Psoas muscle (tissue), 8 donors: ENCODE measurements at regions of chr1 and their contacts with region 1.

Region 1: DNA sequence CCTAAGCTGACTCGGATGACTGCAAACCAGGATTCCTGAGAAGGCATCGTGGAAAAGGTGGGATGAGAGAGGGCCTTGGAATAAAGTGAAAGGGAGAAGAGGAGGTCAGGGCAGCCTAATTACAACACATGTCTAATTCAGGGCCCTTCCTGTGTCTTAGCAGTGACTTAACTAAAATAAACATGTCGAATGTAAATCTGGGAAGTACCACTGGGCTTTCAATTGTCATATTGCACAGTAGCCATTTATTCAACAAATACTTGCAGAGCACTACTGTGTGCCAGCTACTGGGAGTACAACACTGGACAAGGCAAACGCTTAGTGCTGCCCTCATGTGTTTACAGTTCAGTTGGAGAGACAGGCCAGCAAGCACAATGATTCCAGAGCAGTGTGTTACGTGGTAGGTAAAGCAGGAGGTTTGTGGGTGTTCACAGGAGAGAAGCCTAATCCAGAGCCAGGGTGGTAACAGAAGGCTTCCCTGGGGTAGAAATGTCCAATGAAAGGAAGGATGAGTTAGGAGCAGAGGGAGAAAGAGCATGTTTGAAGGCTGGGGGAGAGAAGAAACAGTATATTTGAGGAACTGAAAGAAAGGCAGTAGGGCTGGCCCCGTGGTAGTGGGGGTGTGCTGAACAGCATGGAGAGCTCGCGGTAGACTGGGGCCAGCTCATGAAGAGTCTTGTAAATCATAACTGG is 38.0 kb upstream of the RASAL2 start:
- DNase-seq: no peak
- ATAC-seq: peak; percentile 58 to 78 (median 67)
- H3K4me3 ChIP-seq: no peak overlapping the region
- H3K27ac ChIP-seq: peak overlapping the region; percentile 31
- H3K4me1 ChIP-seq: peaks cover 10% of the 10 kb centered on the region
- H3K27me3 ChIP-seq: no peaks in the 10 kb centered on the region
- CTCF ChIP-seq: peak; percentile 16

Region 2: GRCh38 chr1:177690996-177691395 is 364.9 kb before region 1 on chr1:
- intact Hi-C with region 1: no loop called
- DNase-seq: no peak
- ATAC-seq: no peak
- H3K4me3 ChIP-seq: no peak overlapping the region
- H3K27ac ChIP-seq: no peak overlapping the region
- H3K4me1 ChIP-seq: no peaks in the 10 kb centered on the region
- H3K27me3 ChIP-seq: no peaks in the 10 kb centered on the region
- CTCF ChIP-seq: no peak

Region 3: GRCh38 chr1:177969825-177970371 is 86.0 kb before region 1 on chr1 and contains the start of gene SEC16B:
- intact Hi-C with region 1: loop called in 1 of 2 experiments (anchors 5 kb)
- DNase-seq: no peak
- ATAC-seq: no peak
- H3K4me3 ChIP-seq: no peak within 1 kb of the TSS
- H3K27ac ChIP-seq: no peak within 1 kb of the TSS
- H3K4me1 ChIP-seq: no peaks in the 10 kb centered on the region
- H3K27me3 ChIP-seq: no peaks in the 10 kb centered on the region
- CTCF ChIP-seq: no peak
- total RNA-seq, gene SEC16B: 0.42 to 2.3 (median 1.2) TPM

Region 4: DNA sequence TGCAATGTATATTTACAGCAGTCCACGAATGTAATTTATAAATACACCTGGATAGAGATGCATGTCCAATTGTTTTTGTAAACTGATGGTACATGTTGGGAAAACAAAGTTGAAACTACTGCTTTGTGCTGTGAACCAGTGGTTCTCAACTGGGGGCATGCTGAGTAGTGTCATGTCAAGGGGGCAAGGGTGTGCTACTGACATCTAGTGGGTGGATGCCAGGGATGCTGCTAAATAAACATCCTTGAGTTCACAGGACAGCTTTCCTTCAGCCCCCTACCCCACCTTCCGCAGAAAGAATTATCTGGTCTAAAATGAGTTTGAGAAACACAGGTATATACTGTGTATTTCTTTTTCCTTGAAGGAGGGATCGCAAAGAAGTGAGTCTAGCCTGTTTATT is 133.9 kb after region 1 on chr1:
- intact Hi-C with region 1: loop called in 1 of 2 experiments (anchors 10 kb)
- DNase-seq: no peak
- ATAC-seq: peak in 3 of 4 donors; percentile 42 to 73 (median 62)
- H3K4me3 ChIP-seq: no peak overlapping the region
- H3K27ac ChIP-seq: no peak overlapping the region
- H3K4me1 ChIP-seq: no peaks in the 10 kb centered on the region
- H3K27me3 ChIP-seq: no peaks in the 10 kb centered on the region
- CTCF ChIP-seq: peak; percentile 42